ENCODE measurements at regions of chr2 and their contacts with region 1.

Region 1: DNA sequence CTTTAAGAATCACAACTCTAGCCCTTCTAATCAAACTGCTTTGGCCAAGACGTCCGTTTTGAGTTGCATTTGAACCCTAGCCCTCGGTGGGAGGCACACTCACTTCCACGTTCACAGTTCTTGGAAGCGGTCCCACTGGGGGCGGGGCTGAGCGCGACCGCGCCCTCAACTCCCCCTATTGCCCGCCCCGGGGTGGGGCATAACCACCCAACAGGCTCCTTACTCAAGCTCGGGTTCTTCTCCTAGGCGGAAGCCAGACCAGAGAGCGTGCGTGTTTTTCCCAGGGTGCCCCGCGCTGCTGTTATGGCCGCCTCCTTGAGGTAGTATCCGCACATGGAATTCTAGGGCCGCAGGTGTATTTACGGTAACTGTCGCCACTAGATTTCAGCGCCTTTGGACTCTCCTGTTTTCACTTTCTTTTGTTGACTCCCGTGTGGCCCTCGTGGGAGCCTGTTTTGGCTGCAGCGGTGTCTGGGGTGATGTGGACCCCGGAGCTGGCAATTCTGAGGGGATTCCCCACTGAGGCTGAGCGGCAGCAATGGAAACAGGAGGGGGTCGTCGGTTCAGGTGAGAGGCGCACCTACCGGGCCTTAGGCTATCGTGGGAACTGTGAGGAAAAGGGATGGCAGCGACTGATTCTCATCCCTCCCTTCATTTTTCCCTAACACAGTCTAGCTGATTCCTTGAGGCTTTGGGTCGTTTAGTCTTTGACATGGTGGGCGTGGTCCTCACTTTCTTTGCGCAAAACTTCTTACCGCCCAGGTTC is at the start of gene TTC27:
- DNase-seq: peak; percentile 93 to 96 (median 95)
- ATAC-seq: peak; percentile 100
- H3K4me3 ChIP-seq: peak within 1 kb of the TSS; percentile 89
- H3K4me3 Mint-ChIP-seq: peak within 1 kb of the TSS; percentile 85 to 97 (median 95)
- H3K27ac ChIP-seq: peak within 1 kb of the TSS; percentile 82
- H3K27ac Mint-ChIP-seq: peak within 1 kb of the TSS; percentile 82 to 98 (median 89)
- H3K4me1 ChIP-seq: no peaks in the 10 kb centered on the region
- H3K4me1 Mint-ChIP-seq: peaks cover 10 to 44% (median 31%) of the 10 kb centered on the region in 7 donors
- H3K27me3 ChIP-seq: no peaks in the 10 kb centered on the region
- H3K27me3 Mint-ChIP-seq: no peaks in the 10 kb centered on the region
- total RNA-seq, gene TTC27: 18.5 to 27.5 (median 23.3) TPM

Region 2: DNA sequence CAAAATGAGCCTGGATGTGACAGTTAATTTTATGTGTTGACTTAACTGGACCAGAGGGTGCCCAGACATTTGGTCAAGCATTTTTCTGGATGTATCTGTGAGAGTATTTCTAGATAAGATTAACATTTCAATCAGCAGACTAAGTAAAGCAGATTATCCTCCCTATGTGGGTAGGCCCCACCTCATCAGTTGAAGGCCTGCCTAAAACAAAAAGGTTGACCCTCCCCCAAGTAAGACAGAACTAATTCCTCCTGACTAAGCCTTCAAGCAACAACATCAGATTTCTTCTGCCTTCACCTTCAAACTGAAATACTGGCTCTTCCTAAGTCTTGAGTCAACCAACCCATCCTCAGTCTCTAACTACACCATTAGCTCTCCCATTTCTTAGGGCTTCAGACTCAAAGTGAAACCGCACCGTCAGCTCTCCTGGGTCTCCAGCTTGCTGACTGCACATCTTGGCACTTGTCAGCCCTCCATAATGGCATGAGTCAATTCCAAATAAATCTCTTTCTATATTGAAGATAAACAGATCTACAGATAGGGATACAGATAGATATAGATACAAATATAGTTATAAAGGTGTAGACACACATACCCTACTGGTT is 665.1 kb before region 1 on chr2:
- CTCF ChIA-PET with region 1: no interaction called
- POLR2A ChIA-PET with region 1: no interaction called
- intact Hi-C with region 1: no loop called
- DNase-seq: peak in 1 of 9 donors; percentile 24
- ATAC-seq: no peak
- H3K4me3 ChIP-seq: no peak overlapping the region
- H3K4me3 Mint-ChIP-seq: peak overlapping the region in 4 of 10 donors; percentile 15 to 48 (median 24)
- H3K27ac ChIP-seq: no peak overlapping the region
- H3K27ac Mint-ChIP-seq: peak overlapping the region in 6 of 9 donors; percentile 1 to 69 (median 3)
- H3K4me1 ChIP-seq: peaks cover 8 to 11% of the 10 kb centered on the region in 2 donors
- H3K4me1 Mint-ChIP-seq: peaks cover 36 to 56% (median 49%) of the 10 kb centered on the region in 7 donors
- H3K27me3 ChIP-seq: no peaks in the 10 kb centered on the region
- H3K27me3 Mint-ChIP-seq: no peaks in the 10 kb centered on the region

Region 3: DNA sequence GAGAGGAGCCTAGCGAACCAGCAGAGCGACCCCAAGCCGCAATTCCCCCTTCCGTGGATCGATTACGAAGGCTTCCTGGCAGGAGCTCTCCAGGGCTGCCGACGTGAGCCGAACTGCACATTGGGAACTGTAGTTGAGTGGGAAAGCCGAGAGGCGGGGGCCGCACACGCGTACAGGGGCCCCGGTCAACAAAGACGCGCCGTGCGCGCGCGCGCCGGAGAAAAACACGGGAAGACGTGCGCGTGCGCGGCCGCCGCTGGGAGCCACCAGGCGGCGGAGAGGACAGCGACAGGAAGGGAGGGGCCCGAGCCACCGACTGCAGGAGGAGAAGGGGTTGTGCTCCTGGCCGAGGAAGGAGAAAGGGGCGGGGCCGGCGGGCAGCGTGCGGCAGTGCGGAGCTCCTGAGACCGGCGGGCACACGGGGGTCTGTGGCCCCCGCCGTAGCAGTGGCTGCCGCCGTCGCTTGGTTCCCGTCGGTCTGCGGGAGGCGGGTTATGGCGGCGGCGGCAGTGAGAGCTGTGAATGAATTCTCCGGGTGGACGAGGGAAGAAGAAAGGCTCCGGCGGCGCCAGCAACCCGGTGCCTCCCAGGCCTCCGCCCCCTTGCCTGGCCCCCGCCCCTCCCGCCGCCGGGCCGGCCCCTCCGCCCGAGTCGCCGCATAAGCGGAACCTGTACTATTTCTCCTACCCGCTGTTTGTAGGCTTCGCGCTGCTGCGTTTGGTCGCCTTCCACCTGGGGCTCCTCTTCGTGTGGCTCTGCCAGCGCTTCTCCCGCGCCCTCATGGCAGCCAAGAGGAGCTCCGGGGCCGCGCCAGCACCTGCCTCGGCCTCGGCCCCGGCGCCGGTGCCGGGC is 564.5 kb before region 1 on chr2 and contains the start of gene SPAST:
- CTCF ChIA-PET with region 1: no interaction called
- POLR2A ChIA-PET with region 1: no interaction called
- intact Hi-C with region 1: loop called (anchors 1 kb)
- DNase-seq: peak; percentile 92 to 97 (median 95)
- ATAC-seq: peak; percentile 93
- H3K4me3 ChIP-seq: peak within 1 kb of the TSS; percentile 99
- H3K4me3 Mint-ChIP-seq: peak within 1 kb of the TSS; percentile 91 to 100 (median 98)
- H3K27ac ChIP-seq: peak within 1 kb of the TSS; percentile 88
- H3K27ac Mint-ChIP-seq: peak within 1 kb of the TSS; percentile 88 to 97 (median 92)
- H3K4me1 ChIP-seq: peaks cover 5 to 15% of the 10 kb centered on the region in 2 donors
- H3K4me1 Mint-ChIP-seq: peaks cover 22 to 46% (median 37%) of the 10 kb centered on the region in 7 donors
- H3K27me3 ChIP-seq: no peaks in the 10 kb centered on the region
- H3K27me3 Mint-ChIP-seq: peaks cover 0 to 1% (median 0%) of the 10 kb centered on the region in 5 donors
- total RNA-seq, gene SPAST: 16.3 to 21.0 (median 20.3) TPM

Region 4: DNA sequence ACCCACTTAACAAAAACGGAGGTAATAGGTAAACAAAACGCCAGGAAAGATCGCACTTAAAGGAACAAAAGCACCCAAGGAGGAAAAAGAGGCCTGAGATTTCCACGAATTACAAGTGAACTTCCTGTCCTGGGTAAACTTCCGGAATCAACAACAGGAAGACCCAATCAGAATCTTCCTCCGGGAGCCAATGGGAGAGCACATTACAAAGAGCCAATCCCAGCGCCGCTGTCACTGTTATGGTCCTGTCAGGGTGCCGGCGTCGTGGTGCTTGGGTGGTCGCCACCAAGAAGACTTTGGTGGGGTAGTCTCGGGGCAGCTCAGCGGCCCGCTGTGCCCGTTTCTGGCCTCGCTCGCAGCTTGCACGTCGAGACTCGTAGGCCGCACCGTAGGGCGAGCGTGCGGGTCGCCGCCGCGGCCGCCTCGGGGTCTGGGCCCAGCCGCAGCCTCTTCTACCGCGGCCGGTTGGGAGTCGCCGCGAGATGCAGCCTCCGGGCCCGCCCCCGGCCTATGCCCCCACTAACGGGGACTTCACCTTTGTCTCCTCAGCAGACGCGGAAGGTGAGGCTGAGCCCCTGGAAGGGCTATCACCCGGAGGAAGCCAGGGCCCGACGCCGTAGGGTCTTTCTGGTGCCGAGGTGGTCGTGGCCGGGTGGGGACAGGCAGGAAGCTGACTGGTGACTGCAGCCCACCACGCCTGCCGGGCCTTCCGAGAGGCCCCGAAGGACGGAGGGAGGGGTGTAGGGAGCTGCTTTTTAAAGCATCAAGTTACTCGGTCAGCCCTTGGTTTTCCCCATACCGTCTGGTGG is 350.1 kb before region 1 on chr2 and contains the start of gene YIPF4:
- CTCF ChIA-PET with region 1: no interaction called
- POLR2A ChIA-PET with region 1: interaction called, 3 read pairs
- intact Hi-C with region 1: loop called (anchors 1 to 5 kb)
- DNase-seq: peak; percentile 84 to 92 (median 88)
- ATAC-seq: peak; percentile 99
- H3K4me3 ChIP-seq: peak within 1 kb of the TSS; percentile 67
- H3K4me3 Mint-ChIP-seq: peak within 1 kb of the TSS; percentile 82 to 100 (median 94)
- H3K27ac ChIP-seq: peak within 1 kb of the TSS; percentile 84
- H3K27ac Mint-ChIP-seq: peak within 1 kb of the TSS; percentile 91 to 100 (median 98)
- H3K4me1 ChIP-seq: peaks cover under 1 to 6% of the 10 kb centered on the region in 2 donors
- H3K4me1 Mint-ChIP-seq: peaks cover 10 to 46% (median 33%) of the 10 kb centered on the region in 7 donors
- H3K27me3 ChIP-seq: no peaks in the 10 kb centered on the region
- H3K27me3 Mint-ChIP-seq: peaks cover 0 to 6% (median 0%) of the 10 kb centered on the region in 5 donors
- total RNA-seq, gene YIPF4: 21.0 to 43.5 (median 30.5) TPM

Region 5: GRCh38 chr2:32553829-32554432 is 74.1 kb before region 1 on chr2:
- CTCF ChIA-PET with region 1: no interaction called
- POLR2A ChIA-PET with region 1: no interaction called
- intact Hi-C with region 1: loop called in 1 of 2 experiments (anchors 5 kb)
- DNase-seq: peak in 6 of 9 donors; percentile 9 to 44 (median 28)
- ATAC-seq: peak; percentile 80
- H3K4me3 ChIP-seq: no peak overlapping the region
- H3K4me3 Mint-ChIP-seq: no peak overlapping the region
- H3K27ac ChIP-seq: peak overlapping the region; percentile 29
- H3K27ac Mint-ChIP-seq: no peak overlapping the region
- H3K4me1 ChIP-seq: no peaks in the 10 kb centered on the region
- H3K4me1 Mint-ChIP-seq: no peaks in the 10 kb centered on the region
- H3K27me3 ChIP-seq: no peaks in the 10 kb centered on the region
- H3K27me3 Mint-ChIP-seq: no peaks in the 10 kb centered on the region

Region 6: DNA sequence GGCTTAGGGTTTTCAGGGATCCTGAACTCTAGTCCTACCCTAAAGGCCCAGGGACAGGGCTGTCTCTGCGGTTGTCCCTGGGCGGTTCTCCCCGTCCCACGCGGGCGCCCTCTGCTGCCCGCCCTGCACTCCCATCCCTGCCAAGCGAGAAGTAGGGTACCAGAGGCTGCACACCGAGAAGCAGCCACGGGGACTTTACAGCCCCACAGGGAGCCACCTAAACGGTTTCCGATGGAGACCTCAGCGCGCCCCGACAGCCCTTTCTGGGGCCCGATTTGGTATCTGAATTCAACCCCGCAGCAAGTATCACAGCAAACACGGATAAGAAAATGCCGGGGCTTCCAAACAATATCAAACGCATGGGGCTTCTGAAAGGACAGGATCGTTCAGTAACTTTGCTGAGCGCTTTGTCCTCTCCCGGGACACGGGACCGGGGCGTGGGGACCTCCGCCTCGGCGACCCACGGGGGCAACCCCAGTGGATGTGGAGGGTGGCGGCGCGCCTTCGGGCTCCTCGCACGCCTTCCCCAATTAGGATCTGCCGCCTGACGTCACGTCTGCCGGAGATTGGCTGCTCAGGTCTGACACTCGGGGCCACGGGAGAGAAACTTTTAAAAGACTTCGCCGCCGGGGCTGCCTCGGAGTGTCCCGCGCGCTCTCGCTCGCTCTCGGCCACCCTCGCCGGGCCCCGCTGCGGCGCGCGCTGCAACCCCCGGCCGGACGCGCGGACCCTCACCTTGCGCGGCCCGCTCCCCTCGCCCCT is 318.5 kb after region 1 on chr2 and contains the start of gene LTBP1:
- CTCF ChIA-PET with region 1: no interaction called
- POLR2A ChIA-PET with region 1: no interaction called
- intact Hi-C with region 1: loop called in 1 of 2 experiments (anchors 1 kb)
- DNase-seq: peak; percentile 3 to 66 (median 18)
- ATAC-seq: peak; percentile 80
- H3K4me3 ChIP-seq: peak within 1 kb of the TSS; percentile 56
- H3K4me3 Mint-ChIP-seq: peak within 1 kb of the TSS; percentile 64 to 87 (median 81)
- H3K27ac ChIP-seq: no peak within 1 kb of the TSS
- H3K27ac Mint-ChIP-seq: peak within 1 kb of the TSS in 1 of 9 donors; percentile 55
- H3K4me1 ChIP-seq: no peaks in the 10 kb centered on the region
- H3K4me1 Mint-ChIP-seq: peaks cover 3 to 12% (median 5%) of the 10 kb centered on the region in 7 donors
- H3K27me3 ChIP-seq: peaks cover 0 to 7% of the 10 kb centered on the region in 2 donors
- H3K27me3 Mint-ChIP-seq: peaks cover 22 to 40% (median 36%) of the 10 kb centered on the region in 5 donors
- total RNA-seq, gene LTBP1: 0.29 to 2.1 TPM in 2 of 5 experiments, not detected in the others

Region 7: GRCh38 chr2:33599175-33599942 is 971.4 kb after region 1 on chr2 and contains the start of gene FAM98A:
- CTCF ChIA-PET with region 1: no interaction called
- POLR2A ChIA-PET with region 1: interaction called, 4 read pairs
- intact Hi-C with region 1: loop called (anchors 1 kb)
- DNase-seq: peak; percentile 96 to 98 (median 98)
- ATAC-seq: peak; percentile 96
- H3K4me3 ChIP-seq: peak within 1 kb of the TSS; percentile 92
- H3K4me3 Mint-ChIP-seq: peak within 1 kb of the TSS; percentile 91 to 99 (median 96)
- H3K27ac ChIP-seq: peak within 1 kb of the TSS; percentile 89
- H3K27ac Mint-ChIP-seq: peak within 1 kb of the TSS; percentile 86 to 97 (median 96)
- H3K4me1 ChIP-seq: peaks cover 10 to 14% of the 10 kb centered on the region in 2 donors
- H3K4me1 Mint-ChIP-seq: peaks cover 17 to 45% (median 33%) of the 10 kb centered on the region in 7 donors
- H3K27me3 ChIP-seq: no peaks in the 10 kb centered on the region
- H3K27me3 Mint-ChIP-seq: peaks cover 0 to 4% (median 0%) of the 10 kb centered on the region in 5 donors
- total RNA-seq, gene FAM98A: 16.8 to 36.0 (median 32.6) TPM